Stomach (tissue), 19 donors: ENCODE measurements at regions of chr19 and their contacts with region 1.

Region 1: GRCh38 chr19:35468637-35469036 is 20.6 kb downstream of the FFAR2 start:
- DNase-seq: peak; percentile 70 to 85
- H3K4me3 ChIP-seq: no peak overlapping the region
- H3K27ac ChIP-seq: no peak overlapping the region
- H3K4me1 ChIP-seq: peaks cover 0 to 7% (median 6%) of the 10 kb centered on the region in 4 donors
- H3K27me3 ChIP-seq: no peaks in the 10 kb centered on the region
- CTCF ChIP-seq: peak in 5 of 7 experiments; percentile 57 to 84 (median 78)
- EP300 ChIP-seq: no peak
- POLR2A ChIP-seq: no peak

Region 2: GRCh38 chr19:35357867-35358573 is 110.6 kb before region 1 on chr19 and contains the start of gene FFAR3:
- intact Hi-C with region 1: loop called (anchors 5 kb)
- DNase-seq: peak; percentile 65 to 75
- H3K4me3 ChIP-seq: no peak within 1 kb of the TSS
- H3K27ac ChIP-seq: peak within 1 kb of the TSS in 1 of 5 donors; percentile 6
- H3K4me1 ChIP-seq: peaks cover 0 to 27% (median 11%) of the 10 kb centered on the region in 4 donors
- H3K27me3 ChIP-seq: no peaks in the 10 kb centered on the region
- CTCF ChIP-seq: peak in 1 of 7 experiments; percentile 1
- EP300 ChIP-seq: no peak
- POLR2A ChIP-seq: no peak
- total RNA-seq, gene FFAR3: not detected

Region 3: GRCh38 chr19:35716801-35717666 is 248.4 kb after region 1 on chr19:
- intact Hi-C with region 1: no loop called
- DNase-seq: peak; percentile 87 to 99
- H3K4me3 ChIP-seq: peak overlapping the region; percentile 93 to 98 (median 95)
- H3K27ac ChIP-seq: peak overlapping the region; percentile 84 to 95 (median 94)
- H3K4me1 ChIP-seq: peaks cover 25 to 54% (median 43%) of the 10 kb centered on the region in 4 donors
- H3K27me3 ChIP-seq: no peaks in the 10 kb centered on the region
- CTCF ChIP-seq: peak in 5 of 7 experiments; percentile 71 to 96 (median 85)
- EP300 ChIP-seq: no peak
- POLR2A ChIP-seq: no peak